ENCODE measurements at regions of chr5 and their contacts with region 1.

Region 1: GRCh38 chr5:82356808-82357671 is 78.9 kb upstream of the RPS23 start:
- DNase-seq: peak; percentile 21
- CTCF ChIP-seq: no peak

Region 2: DNA sequence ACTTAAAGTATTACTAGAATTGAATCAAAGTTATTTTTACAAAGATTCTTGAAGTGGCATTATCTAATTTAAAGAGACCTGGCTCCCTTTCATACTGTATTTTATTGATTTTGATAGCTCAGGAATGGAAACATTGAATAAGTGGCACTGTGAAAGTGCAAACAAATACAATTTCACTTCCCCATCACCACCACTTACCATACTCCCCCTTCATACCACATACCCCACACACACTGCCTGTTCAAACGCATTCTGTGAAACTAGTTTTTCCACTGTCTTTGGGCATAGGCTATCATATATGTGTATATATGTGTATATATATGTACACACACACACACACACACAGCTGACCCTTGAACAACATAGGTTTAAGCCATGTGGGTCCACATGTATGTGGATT is 447.4 kb before region 1 on chr5:
- in situ Hi-C with region 1: no loop called
- DNase-seq: peak; percentile 23
- CTCF ChIP-seq: no peak

Region 3: DNA sequence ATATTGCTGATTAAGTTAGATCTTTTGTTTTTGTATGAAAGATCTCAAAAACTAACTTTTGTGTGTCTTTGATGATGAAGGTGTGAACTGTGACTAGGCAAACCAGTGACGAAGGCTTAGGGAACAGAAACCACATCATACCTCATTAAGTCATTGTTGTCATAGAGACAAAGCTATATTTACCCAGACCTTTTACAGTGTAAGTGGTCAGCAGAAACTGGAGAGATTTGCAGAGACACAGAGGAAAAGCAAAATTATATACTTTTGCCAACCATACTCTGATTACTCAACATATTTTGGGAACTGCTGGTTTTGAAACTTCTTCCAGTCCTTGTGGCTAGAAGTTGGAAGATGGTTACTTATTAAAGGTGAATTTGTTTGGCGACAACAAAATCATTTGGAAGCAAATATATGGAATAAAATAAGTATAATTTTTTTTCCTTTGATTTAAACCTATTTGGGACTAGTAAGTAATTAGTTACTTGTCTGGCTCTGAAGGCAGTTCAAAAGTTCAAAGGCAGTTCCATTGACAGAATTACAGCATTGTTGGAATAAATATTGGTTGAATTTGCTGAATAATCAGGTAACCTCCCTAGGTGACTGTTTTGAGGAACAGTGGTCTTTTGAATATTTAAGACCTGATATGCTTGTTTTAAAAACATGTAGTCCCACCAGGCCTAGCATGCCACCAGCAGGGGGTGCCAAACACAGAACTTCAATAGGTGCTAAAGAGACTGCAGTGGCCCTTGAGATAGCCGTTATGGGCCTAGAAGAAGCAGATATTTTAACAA is 182.7 kb before region 1 on chr5:
- in situ Hi-C with region 1: no loop called
- DNase-seq: peak; percentile 68
- CTCF ChIP-seq: peak; percentile 66

Region 4: DNA sequence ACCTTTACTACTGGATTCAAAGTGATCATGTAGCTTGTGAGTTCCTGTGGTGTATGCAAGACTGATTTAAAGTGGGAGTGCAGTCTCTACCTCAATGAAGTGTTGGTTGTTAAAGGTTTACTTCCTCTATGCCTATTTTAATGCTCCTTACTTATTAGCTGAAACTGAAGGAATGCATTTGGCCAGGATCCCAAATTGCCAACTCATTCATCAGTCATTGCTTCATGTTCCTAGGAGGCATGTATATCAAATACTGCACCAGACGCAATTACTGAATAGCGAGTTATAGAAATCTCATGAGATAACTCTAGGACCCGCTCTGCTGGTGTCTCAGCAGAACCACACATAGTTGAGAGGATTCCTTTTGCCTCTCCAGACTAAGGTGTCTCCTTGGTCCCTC is 64.1 kb after region 1 on chr5:
- in situ Hi-C with region 1: no loop called
- DNase-seq: no peak
- CTCF ChIP-seq: no peak

Region 5: DNA sequence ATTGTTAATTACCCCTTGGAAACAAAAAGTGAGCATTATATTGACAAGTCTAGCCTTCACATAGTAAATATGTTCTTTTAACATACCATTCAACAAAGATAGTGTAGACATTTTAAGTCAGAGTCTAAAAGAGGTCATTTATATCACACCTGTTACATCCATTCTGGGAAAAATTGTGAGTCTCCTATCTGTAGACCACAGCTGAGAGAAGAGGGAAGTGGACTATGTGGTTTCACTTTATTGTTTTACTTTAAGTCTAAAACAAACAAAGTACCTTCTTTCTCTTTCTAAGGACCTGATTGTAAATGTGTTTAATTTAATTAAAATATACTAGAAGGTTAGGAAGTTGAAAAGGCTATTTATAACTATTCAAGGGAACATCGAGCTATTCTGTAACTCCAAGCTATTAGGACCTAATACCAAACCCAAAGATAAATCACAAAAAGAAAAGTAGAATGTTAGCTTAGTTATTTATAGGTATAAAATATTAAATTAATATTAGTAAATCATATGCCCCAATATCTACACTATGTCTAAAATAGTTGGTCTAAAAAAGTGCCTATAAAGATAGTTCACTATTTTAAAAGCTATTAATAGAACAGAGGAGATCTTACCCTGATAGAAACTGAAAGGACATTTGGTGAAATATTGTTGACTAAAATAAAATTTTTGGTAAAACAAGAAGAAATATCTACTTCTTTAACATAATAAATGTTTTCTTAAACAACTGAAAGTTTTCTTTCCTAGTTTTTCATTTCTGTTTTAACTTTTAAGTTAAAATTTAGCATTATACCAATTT is 585.2 kb after region 1 on chr5:
- in situ Hi-C with region 1: no loop called
- DNase-seq: no peak
- CTCF ChIP-seq: no peak

Region 6: GRCh38 chr5:83564069-83564749 is 1207.2 kb after region 1 on chr5:
- in situ Hi-C with region 1: loop called (anchors 5 kb)
- DNase-seq: peak; percentile 24
- CTCF ChIP-seq: peak; percentile 54